ENCODE measurements at regions of chr10 and their contacts with region 1.

Region 1: GRCh38 chr10:3043512-3044368 is 23.6 kb upstream of the PFKP start:
- DNase-seq: peak; percentile 50 to 69
- H3K4me3 ChIP-seq: no peak overlapping the region
- H3K27ac ChIP-seq: no peak overlapping the region
- H3K4me1 ChIP-seq: peaks cover 36% of the 10 kb centered on the region
- H3K27me3 ChIP-seq: no peaks in the 10 kb centered on the region
- CTCF ChIP-seq: peak; percentile 76

Region 2: DNA sequence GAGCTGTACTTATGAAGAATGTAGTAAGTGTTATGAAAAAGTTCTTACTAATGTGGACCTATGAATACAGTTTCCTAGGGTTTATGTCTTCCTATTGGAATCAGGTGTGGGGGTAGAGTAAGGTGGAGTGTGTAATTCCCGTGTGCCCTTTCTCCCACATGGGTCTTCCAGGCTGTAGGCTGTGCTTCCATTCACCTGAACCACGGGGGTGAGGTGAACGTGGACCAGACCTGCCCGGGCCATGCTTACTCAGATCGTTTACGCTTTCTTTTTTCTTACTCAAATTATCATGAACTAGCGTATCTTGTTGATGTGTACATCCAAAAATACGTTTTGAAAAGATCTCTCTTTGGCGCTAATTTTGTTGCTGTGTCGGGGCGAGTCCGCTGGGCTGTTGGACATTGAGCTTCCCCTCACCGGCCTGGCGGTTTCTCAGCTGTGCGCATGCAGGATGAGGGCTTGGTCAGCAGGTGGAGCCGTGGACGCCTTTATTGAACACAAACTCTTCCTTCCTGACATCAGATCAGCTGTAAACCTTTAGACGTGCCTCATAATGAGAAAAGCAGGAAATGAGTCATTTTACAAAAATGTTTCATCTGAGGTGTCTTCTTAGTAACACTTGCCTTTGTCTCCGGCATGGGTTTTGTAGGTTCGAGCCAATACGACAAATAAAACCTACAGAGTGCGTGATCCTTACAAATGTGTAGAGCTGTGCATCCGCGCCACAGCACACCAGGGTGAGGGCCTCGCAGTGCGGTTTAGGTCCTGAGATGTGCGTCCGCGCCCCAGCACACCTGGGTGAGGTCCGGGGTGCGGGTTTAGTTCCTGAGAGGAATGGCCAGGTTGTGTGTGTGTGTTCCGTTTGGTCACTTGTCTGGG is 1933.7 kb before region 1 on chr10:
- CTCF ChIA-PET with region 1: no interaction called
- POLR2A ChIA-PET with region 1: no interaction called
- intact Hi-C with region 1: loop called (anchors 10 kb)
- DNase-seq: peak; percentile 46 to 53
- H3K4me3 ChIP-seq: no peak overlapping the region
- H3K27ac ChIP-seq: no peak overlapping the region
- H3K4me1 ChIP-seq: no peaks in the 10 kb centered on the region
- H3K27me3 ChIP-seq: no peaks in the 10 kb centered on the region
- CTCF ChIP-seq: peak; percentile 63

Region 3: GRCh38 chr10:2927958-2928840 is 115.5 kb before region 1 on chr10:
- CTCF ChIA-PET with region 1: no interaction called
- POLR2A ChIA-PET with region 1: no interaction called
- intact Hi-C with region 1: loop called (anchors 1 kb)
- DNase-seq: peak; percentile 39 to 66
- H3K4me3 ChIP-seq: no peak overlapping the region
- H3K27ac ChIP-seq: no peak overlapping the region
- H3K4me1 ChIP-seq: no peaks in the 10 kb centered on the region
- H3K27me3 ChIP-seq: peaks cover 74% of the 10 kb centered on the region
- CTCF ChIP-seq: peak; percentile 75

Region 4: DNA sequence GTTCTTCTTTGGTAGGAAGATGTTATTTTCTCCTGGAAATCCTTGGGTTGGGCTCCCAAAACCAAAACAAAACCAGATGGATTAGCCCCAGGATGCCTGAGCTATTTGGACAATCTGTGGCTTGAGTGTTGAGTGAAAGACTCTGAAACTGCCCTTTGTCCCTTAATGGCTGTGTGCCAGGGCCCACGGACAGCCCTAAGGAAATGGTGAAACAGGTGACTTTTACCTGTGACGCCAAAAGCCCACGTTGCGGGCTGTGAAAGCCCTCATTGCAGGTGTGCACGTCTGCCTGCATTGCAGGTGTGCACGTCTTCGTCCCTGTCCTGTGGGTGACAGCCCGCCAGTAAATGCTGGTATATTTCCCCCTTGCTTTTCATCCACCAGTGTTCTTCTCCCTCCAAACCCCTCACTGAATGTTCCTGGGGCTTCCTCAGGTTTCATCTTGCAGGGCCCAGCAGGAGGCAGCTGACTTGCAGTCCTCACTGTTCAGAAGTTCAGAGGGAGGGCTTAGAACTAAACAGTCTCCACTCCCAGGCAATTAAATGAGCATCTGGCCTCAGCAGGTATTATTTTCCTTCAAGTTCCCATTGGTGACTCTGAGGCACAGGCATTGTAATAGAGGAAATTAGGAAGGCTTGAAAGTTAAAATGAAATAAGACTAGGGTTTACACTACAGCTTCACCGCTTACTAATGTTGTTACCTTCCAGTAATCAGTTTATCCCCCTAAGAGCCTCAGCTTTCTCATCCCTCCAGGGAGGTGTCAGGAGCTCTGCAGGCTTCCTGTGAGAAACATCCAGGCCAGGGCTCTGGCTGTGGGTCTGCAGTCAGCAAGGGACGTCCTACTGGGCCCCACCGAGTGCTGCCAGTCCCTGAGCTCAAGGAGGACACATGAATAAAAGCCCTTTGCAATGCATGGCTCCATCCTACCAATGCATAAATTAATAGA is 34.5 kb after region 1 on chr10:
- CTCF ChIA-PET with region 1: no interaction called
- POLR2A ChIA-PET with region 1: no interaction called
- intact Hi-C with region 1: no loop called
- DNase-seq: no peak
- H3K4me3 ChIP-seq: no peak overlapping the region
- H3K27ac ChIP-seq: no peak overlapping the region
- H3K4me1 ChIP-seq: peaks cover 5% of the 10 kb centered on the region; the same call in 1 of the 2 replicates
- H3K27me3 ChIP-seq: no peaks in the 10 kb centered on the region
- CTCF ChIP-seq: no peak

Region 5: GRCh38 chr10:3095373-3096139 is 51.8 kb after region 1 on chr10:
- CTCF ChIA-PET with region 1: no interaction called
- POLR2A ChIA-PET with region 1: interaction called, 5 read pairs
- intact Hi-C with region 1: loop called (anchors 1 kb)
- DNase-seq: peak; percentile 68 to 98
- H3K4me3 ChIP-seq: peak overlapping the region; percentile 25; the same call in 1 of the 2 replicates
- H3K27ac ChIP-seq: peak overlapping the region; percentile 99
- H3K4me1 ChIP-seq: peaks cover 54% of the 10 kb centered on the region
- H3K27me3 ChIP-seq: no peaks in the 10 kb centered on the region
- CTCF ChIP-seq: no peak

Region 6: GRCh38 chr10:3172446-3173170 is 128.9 kb after region 1 on chr10 and contains the start of gene PITRM1:
- CTCF ChIA-PET with region 1: no interaction called
- POLR2A ChIA-PET with region 1: interaction called, 3 read pairs
- intact Hi-C with region 1: loop called (anchors 5 kb)
- DNase-seq: peak; percentile 93 to 98
- H3K4me3 ChIP-seq: peak within 1 kb of the TSS; percentile 94
- H3K27ac ChIP-seq: peak within 1 kb of the TSS; percentile 76
- H3K4me1 ChIP-seq: peaks cover 8% of the 10 kb centered on the region
- H3K27me3 ChIP-seq: no peaks in the 10 kb centered on the region
- CTCF ChIP-seq: no peak
- total RNA-seq, gene PITRM1: 92.3 and 124 TPM in 2 replicates